ENCODE measurements at regions of chr17 and their contacts with region 1.

Region 1: DNA sequence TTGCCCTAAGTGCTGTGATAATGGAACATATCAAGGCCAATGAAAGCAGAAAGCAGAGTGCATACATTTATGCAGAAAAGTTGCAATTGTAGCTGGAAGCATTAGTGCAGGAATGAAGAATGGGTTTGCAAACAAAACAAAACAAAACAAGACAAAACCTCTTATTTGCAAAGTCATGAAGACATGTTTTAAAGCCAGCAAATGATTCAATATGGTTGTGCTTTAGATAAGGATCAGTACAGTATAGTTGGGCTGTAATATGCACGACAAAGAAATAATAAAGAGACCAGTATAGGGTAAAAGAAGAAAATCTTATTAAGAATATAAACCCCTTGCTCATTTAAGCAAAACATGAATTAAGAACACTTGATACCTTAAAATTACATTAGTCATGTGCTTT is 398.1 kb downstream of the KIF2B start:
- DNase-seq: no peak
- ATAC-seq: no peak
- H3K4me3 ChIP-seq: no peak overlapping the region
- H3K27ac ChIP-seq: no peak overlapping the region
- H3K4me1 ChIP-seq: no peaks in the 10 kb centered on the region
- H3K27me3 ChIP-seq: no peaks in the 10 kb centered on the region
- CTCF ChIP-seq: no peak
- POLR2A ChIP-seq: no peak
- RAD21 ChIP-seq: no peak

Region 2: GRCh38 chr17:54046570-54046969 is 174.3 kb before region 1 on chr17:
- CTCF ChIA-PET with region 1: no interaction called
- POLR2A ChIA-PET with region 1: no interaction called
- dilution Hi-C with region 1: no loop called
- in situ Hi-C with region 1: no loop called
- intact Hi-C with region 1: loop called (anchors 10 kb)
- DNase-seq: no peak
- ATAC-seq: no peak
- H3K4me3 ChIP-seq: no peak overlapping the region
- H3K27ac ChIP-seq: no peak overlapping the region
- H3K4me1 ChIP-seq: no peaks in the 10 kb centered on the region
- H3K27me3 ChIP-seq: no peaks in the 10 kb centered on the region
- CTCF ChIP-seq: no peak
- POLR2A ChIP-seq: no peak
- RAD21 ChIP-seq: no peak

Region 3: DNA sequence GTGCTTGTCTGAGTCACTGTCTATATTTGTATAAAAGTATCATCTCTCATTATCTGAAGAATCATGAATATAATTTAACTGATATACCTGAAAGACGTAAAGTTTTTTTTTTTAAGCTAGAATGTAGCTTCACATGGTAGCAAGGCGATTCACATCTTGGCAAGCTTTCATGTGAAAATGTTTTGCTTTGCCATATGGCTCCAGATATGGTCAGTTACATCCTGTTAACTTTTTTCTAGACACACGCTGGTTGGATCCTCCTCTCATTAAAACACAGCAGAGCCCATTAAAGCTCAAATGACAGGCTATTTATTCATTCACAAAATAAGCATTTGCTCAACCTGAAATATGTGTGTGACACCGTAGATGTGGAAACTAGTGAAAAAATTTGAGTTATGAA is 14.7 kb after region 1 on chr17:
- CTCF ChIA-PET with region 1: no interaction called
- POLR2A ChIA-PET with region 1: no interaction called
- dilution Hi-C with region 1: no loop called
- in situ Hi-C with region 1: no loop called
- intact Hi-C with region 1: no loop called
- DNase-seq: no peak
- ATAC-seq: no peak
- H3K4me3 ChIP-seq: no peak overlapping the region
- H3K27ac ChIP-seq: no peak overlapping the region
- H3K4me1 ChIP-seq: no peaks in the 10 kb centered on the region
- H3K27me3 ChIP-seq: no peaks in the 10 kb centered on the region
- CTCF ChIP-seq: no peak
- POLR2A ChIP-seq: no peak
- RAD21 ChIP-seq: no peak